CD4-positive, alpha-beta T cell (primary cell): ENCODE measurements at regions of chr19 and their contacts with region 1.

Region 1: GRCh38 chr19:44723952-44724319 is 24.6 kb upstream of the BCL3 start:
- DNase-seq: peak; percentile 57 to 89 (median 76)
- ATAC-seq: peak; percentile 95
- H3K4me3 ChIP-seq: no peak overlapping the region
- H3K4me3 Mint-ChIP-seq: no peak overlapping the region
- H3K27ac ChIP-seq: no peak overlapping the region
- H3K27ac Mint-ChIP-seq: no peak overlapping the region
- H3K4me1 ChIP-seq: peaks cover 27% of the 10 kb centered on the region
- H3K4me1 Mint-ChIP-seq: peaks cover 14% of the 10 kb centered on the region
- H3K27me3 ChIP-seq: peaks cover 0 to 3% of the 10 kb centered on the region in 2 experiments
- H3K27me3 Mint-ChIP-seq: no peaks in the 10 kb centered on the region
- CTCF ChIP-seq: peak; percentile 97

Region 2: DNA sequence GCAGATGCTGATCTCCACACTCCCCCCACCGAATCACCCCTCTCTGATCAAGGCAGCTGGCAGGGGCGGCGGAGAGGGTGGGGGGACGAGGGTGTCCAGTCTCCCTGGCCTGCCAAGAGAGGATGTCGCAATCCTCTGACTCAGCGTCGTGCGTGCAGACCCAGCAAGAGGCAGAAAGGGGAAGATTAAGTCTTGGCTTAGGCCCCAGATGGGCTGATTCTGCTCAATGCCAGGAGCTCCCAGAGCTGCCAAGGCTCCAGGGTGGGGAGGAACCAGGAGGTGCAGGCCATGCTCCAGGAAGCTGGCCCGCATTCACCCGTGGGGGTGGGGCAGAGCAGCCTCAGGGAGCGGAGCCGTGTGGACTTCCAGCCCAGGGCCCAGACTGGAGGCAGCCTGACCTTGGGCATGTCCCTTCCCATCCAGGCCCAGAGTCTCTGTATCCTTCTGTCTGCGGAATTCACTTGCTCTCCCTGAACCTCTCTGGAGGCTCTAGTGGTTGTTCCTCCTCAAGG is 18.0 kb after region 1 on chr19:
- CTCF ChIA-PET with region 1: interaction called, 14 read pairs
- POLR2A ChIA-PET with region 1: interaction called, 4 read pairs
- intact Hi-C with region 1: loop called in 1 of 2 experiments (anchors 2 kb)
- DNase-seq: peak in 3 of 14 experiments; percentile 32 to 82 (median 75)
- ATAC-seq: peak; percentile 24
- H3K4me3 ChIP-seq: no peak overlapping the region
- H3K4me3 Mint-ChIP-seq: no peak overlapping the region
- H3K27ac ChIP-seq: no peak overlapping the region
- H3K27ac Mint-ChIP-seq: no peak overlapping the region
- H3K4me1 ChIP-seq: peaks cover 26% of the 10 kb centered on the region
- H3K4me1 Mint-ChIP-seq: peaks cover 8% of the 10 kb centered on the region
- H3K27me3 ChIP-seq: no peaks in the 10 kb centered on the region
- H3K27me3 Mint-ChIP-seq: no peaks in the 10 kb centered on the region
- CTCF ChIP-seq: no peak

Region 3: DNA sequence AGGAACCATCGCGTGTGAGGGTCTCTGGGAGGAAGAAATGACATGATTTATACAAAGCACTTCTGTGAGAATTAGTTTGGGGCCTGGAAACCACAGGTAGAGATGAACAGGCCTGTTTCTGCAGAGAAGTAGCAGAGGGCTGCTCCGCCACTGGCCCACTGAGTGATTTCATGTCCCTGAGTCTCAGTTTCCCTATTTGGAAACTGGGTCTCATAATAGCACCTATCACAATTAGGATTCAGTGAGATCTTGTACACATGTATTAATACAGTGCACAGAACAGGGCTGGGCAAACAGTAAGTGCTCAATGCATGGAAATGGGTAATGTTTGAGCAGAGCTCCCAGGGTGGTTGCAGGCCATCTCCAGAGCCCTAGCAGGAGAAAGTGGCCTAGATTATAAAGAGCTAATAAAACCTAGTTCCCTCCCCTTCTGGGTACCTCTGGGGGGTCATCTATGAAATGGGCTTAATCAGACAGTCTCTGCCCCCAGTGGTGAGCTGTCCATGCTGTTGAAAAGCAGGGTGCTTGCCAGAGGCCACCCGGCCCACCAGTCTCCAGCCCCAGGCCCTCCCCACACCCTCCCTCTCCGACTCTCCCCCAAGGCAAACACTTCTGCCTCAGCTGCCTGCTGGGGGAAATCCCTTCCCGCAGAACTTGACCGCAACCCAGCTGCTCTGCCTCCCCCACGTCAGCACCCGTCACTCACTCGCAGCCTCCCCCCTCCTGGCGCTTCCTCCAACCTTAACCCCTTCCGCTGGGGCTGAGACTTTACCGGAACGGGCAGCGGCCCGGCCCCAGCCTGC is 29.1 kb after region 1 on chr19:
- CTCF ChIA-PET with region 1: interaction called, 28 read pairs
- POLR2A ChIA-PET with region 1: interaction called, 13 read pairs
- intact Hi-C with region 1: no loop called
- DNase-seq: peak; percentile 85 to 98 (median 92)
- ATAC-seq: peak; percentile 78
- H3K4me3 ChIP-seq: peak overlapping the region; percentile 67
- H3K4me3 Mint-ChIP-seq: peak overlapping the region; percentile 98
- H3K27ac ChIP-seq: peak overlapping the region; percentile 87 to 95
- H3K27ac Mint-ChIP-seq: peak overlapping the region; percentile 99
- H3K4me1 ChIP-seq: peaks cover 88% of the 10 kb centered on the region
- H3K4me1 Mint-ChIP-seq: peaks cover 76% of the 10 kb centered on the region
- H3K27me3 ChIP-seq: no peaks in the 10 kb centered on the region
- H3K27me3 Mint-ChIP-seq: no peaks in the 10 kb centered on the region
- CTCF ChIP-seq: no peak

Region 4: GRCh38 chr19:44782729-44783128 is 58.8 kb after region 1 on chr19:
- CTCF ChIA-PET with region 1: interaction called, 20 read pairs
- POLR2A ChIA-PET with region 1: interaction called, 3 read pairs
- intact Hi-C with region 1: no loop called
- DNase-seq: no peak
- ATAC-seq: no peak
- H3K4me3 ChIP-seq: no peak overlapping the region
- H3K4me3 Mint-ChIP-seq: no peak overlapping the region
- H3K27ac ChIP-seq: no peak overlapping the region
- H3K27ac Mint-ChIP-seq: no peak overlapping the region
- H3K4me1 ChIP-seq: peaks cover 10% of the 10 kb centered on the region
- H3K4me1 Mint-ChIP-seq: peaks cover 6% of the 10 kb centered on the region
- H3K27me3 ChIP-seq: peaks cover 0 to 3% of the 10 kb centered on the region in 2 experiments
- H3K27me3 Mint-ChIP-seq: peaks cover 6% of the 10 kb centered on the region
- CTCF ChIP-seq: no peak